Activated naive CD4-positive, alpha-beta T cell treated with anti-CD3 and anti-CD28 coated beads for 36 hours (primary cell): ENCODE measurements at regions of chr16 and their contacts with region 1.

Region 1: GRCh38 chr16:12079412-12079965 is 103.0 kb downstream of the SNX29 start:
- DNase-seq: no peak
- H3K4me3 Mint-ChIP-seq: peak overlapping the region; percentile 59
- H3K27ac Mint-ChIP-seq: peak overlapping the region; percentile 96
- H3K4me1 Mint-ChIP-seq: peaks cover 74% of the 10 kb centered on the region
- H3K27me3 Mint-ChIP-seq: no peaks in the 10 kb centered on the region

Region 2: DNA sequence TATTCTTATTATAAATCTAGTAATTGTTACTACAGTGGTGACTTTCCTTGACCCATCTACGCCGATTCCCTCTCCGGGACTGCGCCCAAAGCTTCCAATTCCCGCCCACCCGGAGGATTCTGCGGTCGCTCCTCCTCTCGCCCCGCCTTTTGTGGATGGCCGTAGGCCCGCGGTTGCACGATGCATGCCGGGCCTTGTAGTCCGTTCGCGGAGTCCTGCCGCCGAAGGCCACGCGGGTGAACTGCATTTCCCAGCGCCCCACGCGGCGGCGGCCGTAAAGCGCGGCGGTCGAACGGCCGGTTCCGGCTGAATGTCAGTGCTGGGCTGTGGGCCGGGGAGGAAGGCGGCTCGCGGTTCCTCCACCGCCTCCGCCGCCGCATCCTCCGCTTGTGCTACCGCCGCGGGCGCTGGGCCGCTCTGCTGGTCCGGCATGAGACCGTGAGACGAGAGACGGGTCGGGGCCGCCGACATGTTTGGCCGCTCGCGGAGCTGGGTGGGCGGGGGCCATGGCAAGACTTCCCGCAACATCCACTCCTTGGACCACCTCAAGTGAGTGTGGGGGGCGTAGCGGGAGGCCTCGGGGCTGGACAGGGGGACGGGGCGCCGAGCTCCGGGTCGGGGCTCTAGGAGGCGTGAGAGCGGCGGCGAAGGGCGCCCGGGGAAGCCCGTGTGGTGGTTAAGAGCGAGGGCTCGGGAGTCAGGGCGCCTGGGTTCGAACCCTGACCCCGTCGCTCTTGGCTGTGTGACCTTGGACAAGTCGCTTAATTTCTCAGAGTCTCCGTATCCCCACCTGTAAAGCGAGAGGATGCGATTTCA is 1135.0 kb before region 1 on chr16 and contains the start of gene CLEC16A:
- CTCF ChIA-PET with region 1: no interaction called
- intact Hi-C with region 1: loop called (anchors 5 kb)
- DNase-seq: peak; percentile 97
- H3K4me3 Mint-ChIP-seq: peak within 1 kb of the TSS; percentile 81
- H3K27ac Mint-ChIP-seq: peak within 1 kb of the TSS; percentile 70
- H3K4me1 Mint-ChIP-seq: peaks cover 61% of the 10 kb centered on the region
- H3K27me3 Mint-ChIP-seq: no peaks in the 10 kb centered on the region
- total RNA-seq, gene CLEC16A: 18.4 to 20.1 TPM

Region 3: GRCh38 chr16:11783319-11784037 is 296.0 kb before region 1 on chr16:
- CTCF ChIA-PET with region 1: no interaction called
- intact Hi-C with region 1: loop called (anchors 5 kb)
- DNase-seq: peak; percentile 79
- H3K4me3 Mint-ChIP-seq: peak overlapping the region; percentile 71
- H3K27ac Mint-ChIP-seq: peak overlapping the region; percentile 98
- H3K4me1 Mint-ChIP-seq: peaks cover 72% of the 10 kb centered on the region
- H3K27me3 Mint-ChIP-seq: no peaks in the 10 kb centered on the region

Region 4: DNA sequence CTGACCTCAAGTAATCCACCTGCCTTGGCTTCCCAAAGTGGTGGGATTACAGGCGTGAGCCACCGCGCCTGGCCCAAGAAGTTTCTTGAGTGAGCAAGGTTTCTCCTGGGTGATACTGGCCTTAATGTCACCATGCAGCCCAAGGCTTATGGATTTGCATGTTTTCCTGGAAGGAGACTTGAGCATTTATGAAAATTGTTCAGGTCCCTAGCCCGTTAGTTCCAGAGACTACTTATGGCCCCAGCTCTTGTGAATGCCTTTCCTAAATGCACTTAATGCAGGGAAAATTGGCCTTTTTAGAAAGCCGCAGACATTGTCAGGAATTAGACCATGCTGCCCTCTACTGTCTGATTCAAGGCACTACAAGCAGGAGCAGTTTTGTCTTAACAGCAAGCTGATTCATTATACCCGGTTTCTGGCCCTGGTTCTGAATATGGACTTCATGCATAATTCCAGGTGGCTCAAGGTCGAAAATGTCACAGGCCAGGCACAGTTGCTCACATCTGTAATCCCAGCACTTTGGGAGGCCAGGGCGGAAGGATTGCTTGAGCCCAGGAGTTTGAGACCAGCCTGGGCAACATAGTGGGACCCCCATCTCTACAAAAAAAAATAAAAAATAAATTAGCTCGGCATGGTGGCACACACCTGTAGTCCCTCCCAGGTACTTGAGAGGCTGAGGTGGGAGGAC is 11.6 kb before region 1 on chr16:
- CTCF ChIA-PET with region 1: interaction called, 12 read pairs
- intact Hi-C with region 1: no loop called
- DNase-seq: peak; percentile 83
- H3K4me3 Mint-ChIP-seq: no peak overlapping the region
- H3K27ac Mint-ChIP-seq: no peak overlapping the region
- H3K4me1 Mint-ChIP-seq: no peaks in the 10 kb centered on the region
- H3K27me3 Mint-ChIP-seq: no peaks in the 10 kb centered on the region

Region 5: GRCh38 chr16:12095275-12096156 is 16.0 kb after region 1 on chr16:
- CTCF ChIA-PET with region 1: interaction called, 34 read pairs
- intact Hi-C with region 1: no loop called
- DNase-seq: peak; percentile 74
- H3K4me3 Mint-ChIP-seq: peak overlapping the region; percentile 50
- H3K27ac Mint-ChIP-seq: no peak overlapping the region
- H3K4me1 Mint-ChIP-seq: peaks cover 11% of the 10 kb centered on the region
- H3K27me3 Mint-ChIP-seq: no peaks in the 10 kb centered on the region

Region 6: DNA sequence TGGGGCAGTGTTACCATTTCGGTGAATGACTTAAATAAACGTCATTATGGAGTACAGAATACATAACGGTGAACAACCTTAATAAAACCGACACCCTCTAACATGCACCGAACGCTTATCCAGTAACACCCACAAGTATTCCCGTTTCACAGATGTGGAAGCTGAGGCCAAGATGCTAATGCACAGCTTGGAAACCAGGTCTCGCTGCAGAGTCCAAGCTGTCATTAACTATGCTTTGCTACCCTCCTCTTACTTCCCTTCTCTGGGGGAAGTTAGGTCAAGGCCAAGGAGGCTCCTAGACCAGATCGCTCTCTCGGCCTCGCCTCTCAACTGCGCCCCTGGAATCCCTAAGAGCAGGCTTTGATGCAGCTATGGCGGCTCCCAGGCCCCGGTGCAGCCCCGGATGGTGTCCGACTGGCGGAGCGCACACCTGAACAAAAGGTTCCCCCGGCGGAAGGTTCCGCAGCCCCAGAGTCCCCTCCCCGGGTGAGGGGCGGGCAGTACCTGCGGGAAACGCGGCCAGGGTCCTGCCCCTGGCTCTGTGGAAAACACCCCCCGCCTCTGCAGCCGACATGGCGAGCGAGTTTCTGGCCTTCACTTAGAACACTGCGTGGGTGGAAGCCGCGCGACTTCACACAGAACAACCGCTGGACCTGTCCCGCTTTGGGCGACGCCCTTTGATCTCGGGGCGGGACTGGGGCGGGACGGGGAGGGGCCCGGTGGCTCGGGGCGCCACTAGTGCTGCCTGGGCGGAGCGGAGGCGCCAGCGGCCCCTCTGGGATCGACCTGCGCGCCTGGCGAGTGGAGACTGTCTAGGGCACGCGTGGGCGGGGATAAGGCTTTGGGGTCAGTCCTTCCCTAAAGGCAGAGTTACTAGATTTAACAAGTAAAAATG is 724.0 kb after region 1 on chr16 and contains the start of gene CPPED1:
- CTCF ChIA-PET with region 1: no interaction called
- intact Hi-C with region 1: loop called (anchors 5 kb)
- DNase-seq: peak; percentile 92
- H3K4me3 Mint-ChIP-seq: peak within 1 kb of the TSS; percentile 91
- H3K27ac Mint-ChIP-seq: peak within 1 kb of the TSS; percentile 90
- H3K4me1 Mint-ChIP-seq: peaks cover 20% of the 10 kb centered on the region
- H3K27me3 Mint-ChIP-seq: no peaks in the 10 kb centered on the region
- total RNA-seq, gene CPPED1: 6.4 to 6.5 TPM